HCT116 (cell line): ENCODE measurements at regions of chr12 and their contacts with region 1.

Region 1: GRCh38 chr12:16165506-16165905 is 112.0 kb downstream of the SLC15A5 start:
- DNase-seq: peak; percentile 27
- ATAC-seq: peak; percentile 82
- H3K4me3 ChIP-seq: no peak overlapping the region
- H3K27ac ChIP-seq: no peak overlapping the region
- H3K4me1 ChIP-seq: no peaks in the 10 kb centered on the region
- H3K27me3 ChIP-seq: no peaks in the 10 kb centered on the region
- CTCF ChIP-seq: peak; percentile 55 to 68 (median 59); a peak in 5 of 6 replicates
- POLR2A ChIP-seq: no peak
- RAD21 ChIP-seq: peak; percentile 85

Region 2: DNA sequence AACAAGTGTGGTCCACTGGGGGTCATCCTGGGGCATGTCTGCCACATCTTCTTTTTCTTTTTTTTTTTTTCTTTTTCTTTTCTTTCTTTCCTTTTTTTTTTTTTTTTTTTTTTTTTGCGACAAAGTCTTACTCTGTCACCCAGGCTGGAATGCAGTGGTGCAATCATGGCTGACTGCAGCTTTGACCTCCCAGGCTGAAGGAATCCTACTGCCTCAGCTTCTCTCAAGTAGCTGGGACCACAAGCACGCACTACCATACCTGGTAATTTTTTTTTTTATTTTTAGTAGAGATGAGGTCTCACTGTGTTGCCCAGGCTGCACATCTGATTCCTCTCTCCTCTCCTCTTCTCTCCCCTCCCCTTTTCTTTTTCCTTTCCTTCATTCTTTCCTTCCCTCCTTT is 93.4 kb after region 1 on chr12:
- CTCF ChIA-PET with region 1: no interaction called
- POLR2A ChIA-PET with region 1: no interaction called
- RAD21 ChIA-PET with region 1: no interaction called
- intact Hi-C with region 1: no loop called
- DNase-seq: no peak
- ATAC-seq: no peak
- H3K4me3 ChIP-seq: no peak overlapping the region
- H3K27ac ChIP-seq: no peak overlapping the region
- H3K4me1 ChIP-seq: no peaks in the 10 kb centered on the region
- H3K27me3 ChIP-seq: no peaks in the 10 kb centered on the region
- CTCF ChIP-seq: no peak
- POLR2A ChIP-seq: no peak
- RAD21 ChIP-seq: no peak

Region 3: DNA sequence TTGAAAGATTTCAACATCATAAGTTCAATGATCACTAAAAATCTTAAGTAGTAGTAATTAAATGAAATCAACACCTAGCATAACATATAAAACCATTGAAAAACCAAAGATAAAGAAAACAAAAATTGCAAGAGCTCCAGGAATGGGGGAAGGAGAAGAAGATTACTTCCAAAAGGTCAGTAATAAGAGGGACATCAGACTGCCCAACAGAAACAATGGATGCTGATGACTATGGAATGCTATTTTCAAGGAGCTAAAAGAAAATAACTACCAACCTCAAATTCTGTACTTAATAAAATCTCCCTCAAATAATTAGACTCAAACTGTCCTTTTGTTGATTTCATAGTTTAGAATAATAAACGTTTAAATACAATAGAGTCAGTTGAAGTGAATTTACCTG is 754.9 kb after region 1 on chr12:
- CTCF ChIA-PET with region 1: no interaction called
- POLR2A ChIA-PET with region 1: no interaction called
- RAD21 ChIA-PET with region 1: no interaction called
- intact Hi-C with region 1: loop called (anchors 10 kb)
- DNase-seq: no peak
- ATAC-seq: no peak
- H3K4me3 ChIP-seq: no peak overlapping the region
- H3K27ac ChIP-seq: no peak overlapping the region
- H3K4me1 ChIP-seq: no peaks in the 10 kb centered on the region
- H3K27me3 ChIP-seq: no peaks in the 10 kb centered on the region
- CTCF ChIP-seq: no peak
- POLR2A ChIP-seq: no peak
- RAD21 ChIP-seq: no peak